SK-N-SH (cell line): ENCODE measurements at regions of chr6 and their contacts with region 1.

Region 1: DNA sequence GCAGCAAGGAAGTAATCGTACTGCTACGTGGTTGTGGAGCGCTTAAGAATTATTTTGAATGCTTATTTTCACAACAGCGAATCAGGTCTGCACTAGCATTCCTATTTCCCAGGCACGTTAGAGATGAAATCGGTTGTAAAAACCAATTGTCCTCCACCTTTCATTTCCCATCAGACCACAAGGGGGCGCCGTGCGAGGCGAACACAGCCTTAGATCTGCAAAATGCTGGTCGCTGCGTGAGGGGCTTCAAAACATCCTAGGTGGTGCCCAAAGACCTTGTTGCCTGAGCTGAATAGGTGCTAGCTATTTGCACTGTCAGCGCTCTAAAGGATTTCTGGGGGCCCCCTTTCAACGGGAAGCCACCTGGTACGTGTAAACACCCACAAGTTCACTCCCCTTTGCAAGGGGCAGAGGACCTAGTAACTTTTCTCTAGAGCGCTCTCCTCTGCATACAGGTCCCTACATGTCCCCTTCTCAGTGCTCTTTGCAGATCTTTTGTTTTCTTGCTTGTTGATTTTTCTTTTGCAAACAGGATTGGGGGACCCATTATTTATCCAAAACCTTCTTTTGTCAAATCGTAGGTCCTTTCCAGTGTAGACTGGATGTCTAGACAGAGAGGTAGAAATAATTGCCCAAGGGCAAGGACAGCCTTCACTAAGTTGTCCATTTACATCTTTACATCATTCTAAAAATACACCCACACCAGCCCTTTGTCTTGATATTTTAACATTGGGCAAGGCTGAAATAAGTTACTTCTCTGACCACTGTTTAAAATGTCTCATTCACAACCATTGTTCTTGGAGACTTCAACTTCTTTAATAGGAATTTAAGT is 59.8 kb downstream of the NEDD9 start:
- DNase-seq: peak; percentile 63
- H3K4me3 ChIP-seq: peak overlapping the region in 1 of 2 experiments; percentile 31; a peak in 1 of 4 replicates
- H3K27ac ChIP-seq: peak overlapping the region in 1 of 2 experiments; percentile 1; a peak in 1 of 4 replicates
- H3K4me1 ChIP-seq: peaks cover 0 to 8% of the 10 kb centered on the region in 2 experiments; a peak in 1 of 4 replicates
- H3K27me3 ChIP-seq: no peaks in the 10 kb centered on the region
- CTCF ChIP-seq: peak; percentile 80
- EP300 ChIP-seq: no peak
- RAD21 ChIP-seq: peak; percentile 71

Region 2: DNA sequence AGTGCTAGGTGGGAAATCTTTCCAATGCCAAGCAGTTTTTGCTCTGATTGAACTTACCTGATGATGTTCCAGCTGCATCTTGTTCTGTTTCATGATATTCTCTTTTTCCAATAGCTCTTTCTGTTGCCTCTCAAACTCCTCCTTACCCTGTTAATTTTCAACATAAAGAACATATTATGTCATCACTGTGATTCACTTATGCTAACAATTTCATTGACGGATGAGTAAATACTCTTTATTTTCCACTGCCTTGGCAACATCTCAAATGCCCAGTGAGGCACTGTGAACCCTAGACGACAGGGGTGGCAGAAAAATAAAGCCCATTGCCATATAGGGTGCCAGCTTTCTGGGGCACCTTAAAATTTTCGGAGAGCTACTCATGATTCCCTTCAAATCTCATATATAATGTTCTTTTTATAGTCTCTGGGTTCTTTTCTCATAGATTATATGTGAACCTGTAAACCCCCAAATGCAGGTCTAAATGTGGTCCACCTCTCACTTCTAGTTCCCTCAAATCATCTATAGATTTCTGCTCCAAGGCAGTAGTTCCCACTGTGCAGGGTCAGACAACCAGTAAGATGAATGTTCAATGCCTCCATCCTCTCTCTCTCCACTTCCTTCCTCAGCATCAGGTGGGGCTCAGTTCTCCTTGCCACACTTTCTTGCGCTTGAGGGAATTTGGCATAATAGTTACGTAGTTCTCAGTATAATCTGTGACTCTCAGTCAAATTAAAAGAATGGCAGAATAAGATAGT is 15.6 kb after region 1 on chr6:
- CTCF ChIA-PET with region 1: interaction called, 18 read pairs
- POLR2A ChIA-PET with region 1: no interaction called
- DNase-seq: no peak
- H3K4me3 ChIP-seq: no peak overlapping the region
- H3K27ac ChIP-seq: peak overlapping the region in 1 of 2 experiments; percentile 37; a peak in 3 of 4 replicates
- H3K4me1 ChIP-seq: no peaks in the 10 kb centered on the region; a peak in 1 of 4 replicates
- H3K27me3 ChIP-seq: no peaks in the 10 kb centered on the region
- CTCF ChIP-seq: no peak
- EP300 ChIP-seq: no peak
- RAD21 ChIP-seq: no peak